H1 (cell line): ENCODE measurements at regions of chr6 and their contacts with region 1.

Region 1: DNA sequence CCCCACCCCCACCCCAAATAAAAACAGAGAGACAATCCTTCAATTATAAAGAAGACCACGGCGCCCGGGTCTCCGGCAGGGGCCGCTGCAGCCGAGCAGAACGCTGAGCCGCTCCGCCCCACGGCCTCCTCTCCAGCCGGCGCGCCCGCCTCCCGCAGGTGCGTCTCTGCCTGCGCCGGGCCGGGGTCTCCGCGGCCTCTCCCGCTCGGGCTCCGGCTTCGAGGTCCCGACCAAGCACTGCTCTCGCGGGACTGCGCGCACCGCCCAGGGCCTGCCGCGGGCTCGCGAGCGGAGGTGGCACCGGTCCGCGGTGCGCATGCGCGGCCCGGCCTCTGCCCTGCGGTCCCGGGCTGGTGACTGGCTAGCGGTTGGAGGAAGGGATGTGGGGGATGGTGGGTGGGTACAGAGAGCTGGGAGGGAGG is 241 bp upstream of the SIRT5 start:
- DNase-seq: peak; percentile 91 to 96
- H3K4me3 ChIP-seq: peak overlapping the region; percentile 69 to 80 (median 75)
- H3K27ac ChIP-seq: peak overlapping the region; percentile 87
- H3K4me1 ChIP-seq: peaks cover 0 to 6% (median 5%) of the 10 kb centered on the region in 4 experiments; a peak in 6 of 7 replicates
- H3K27me3 ChIP-seq: no peaks in the 10 kb centered on the region
- CTCF ChIP-seq: peak; percentile 46 to 70 (median 63)
- EP300 ChIP-seq: no peak
- POLR2A ChIP-seq: peak; percentile 39 to 76; a peak in 2 of 3 replicates
- RAD21 ChIP-seq: peak; percentile 38 to 59

Region 2: GRCh38 chr6:13336553-13336952 is 237.6 kb before region 1 on chr6:
- CTCF ChIA-PET with region 1: interaction called, 11 read pairs
- POLR2A ChIA-PET with region 1: interaction called, 12 read pairs
- DNase-seq: peak; percentile 88 to 98
- H3K4me3 ChIP-seq: no peak overlapping the region
- H3K27ac ChIP-seq: no peak overlapping the region
- H3K4me1 ChIP-seq: peaks cover 0 to 2% (median 0%) of the 10 kb centered on the region in 4 experiments; a peak in 1 of 7 replicates
- H3K27me3 ChIP-seq: no peaks in the 10 kb centered on the region; a peak in 1 of 7 replicates
- CTCF ChIP-seq: peak; percentile 72 to 98 (median 87)
- EP300 ChIP-seq: no peak
- POLR2A ChIP-seq: no peak
- RAD21 ChIP-seq: peak; percentile 97 to 98

Region 3: GRCh38 chr6:13487122-13488014 is 86.8 kb before region 1 on chr6 and contains the start of gene GFOD1:
- CTCF ChIA-PET with region 1: interaction called, 6 read pairs
- POLR2A ChIA-PET with region 1: interaction called, 29 read pairs
- DNase-seq: peak; percentile 39 to 89
- H3K4me3 ChIP-seq: peak within 1 kb of the TSS; percentile 57 to 87 (median 75)
- H3K27ac ChIP-seq: no peak within 1 kb of the TSS
- H3K4me1 ChIP-seq: peaks cover 0 to 8% (median 3%) of the 10 kb centered on the region in 4 experiments; a peak in 5 of 7 replicates
- H3K27me3 ChIP-seq: peaks cover 7 to 53% (median 32%) of the 10 kb centered on the region in 4 experiments
- CTCF ChIP-seq: no peak
- EP300 ChIP-seq: no peak
- POLR2A ChIP-seq: peak in 1 of 2 experiments; percentile 40; a peak in 2 of 3 replicates
- RAD21 ChIP-seq: peak; percentile 2 to 15; a peak in 2 of 4 replicates
- total RNA-seq, gene GFOD1: 8.5 and 8.8 TPM in 2 replicates

Region 4: DNA sequence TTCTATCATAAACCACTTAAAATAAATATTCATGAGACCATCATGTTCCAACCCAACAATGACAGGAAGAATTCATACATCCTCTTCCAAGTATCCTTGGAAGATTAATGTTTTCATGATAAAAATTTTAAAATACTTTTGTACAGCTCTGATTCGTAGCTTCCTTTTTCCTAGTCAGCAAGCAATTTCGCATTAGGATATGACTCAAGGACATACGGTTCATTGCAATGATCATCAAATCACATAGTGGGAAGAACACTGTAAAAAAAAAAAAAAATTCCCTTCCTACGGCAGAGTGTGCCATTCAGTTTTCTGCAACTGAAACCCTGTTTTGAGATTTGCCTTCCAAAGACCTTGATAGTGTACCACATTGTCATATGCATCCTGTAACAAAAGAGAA is 51.5 kb before region 1 on chr6:
- CTCF ChIA-PET with region 1: no interaction called
- POLR2A ChIA-PET with region 1: no interaction called
- DNase-seq: no peak
- H3K4me3 ChIP-seq: no peak overlapping the region
- H3K27ac ChIP-seq: no peak overlapping the region
- H3K4me1 ChIP-seq: no peaks in the 10 kb centered on the region
- H3K27me3 ChIP-seq: no peaks in the 10 kb centered on the region
- CTCF ChIP-seq: no peak
- EP300 ChIP-seq: no peak
- POLR2A ChIP-seq: no peak
- RAD21 ChIP-seq: no peak

Region 5: GRCh38 chr6:13561624-13562267 is 12.4 kb before region 1 on chr6:
- CTCF ChIA-PET with region 1: interaction called, 24 read pairs
- POLR2A ChIA-PET with region 1: interaction called, 16 read pairs
- DNase-seq: no peak
- H3K4me3 ChIP-seq: no peak overlapping the region
- H3K27ac ChIP-seq: no peak overlapping the region
- H3K4me1 ChIP-seq: no peaks in the 10 kb centered on the region; a peak in 1 of 7 replicates
- H3K27me3 ChIP-seq: no peaks in the 10 kb centered on the region
- CTCF ChIP-seq: no peak
- EP300 ChIP-seq: no peak
- POLR2A ChIP-seq: no peak
- RAD21 ChIP-seq: no peak

Region 6: GRCh38 chr6:13614926-13615798 is 41.0 kb after region 1 on chr6 and contains the start of gene NOL7:
- CTCF ChIA-PET with region 1: interaction called, 15 read pairs
- POLR2A ChIA-PET with region 1: interaction called, 32 read pairs
- DNase-seq: peak; percentile 95 to 99
- H3K4me3 ChIP-seq: peak within 1 kb of the TSS; percentile 58 to 99 (median 91)
- H3K27ac ChIP-seq: peak within 1 kb of the TSS; percentile 87
- H3K4me1 ChIP-seq: peaks cover 0 to 2% (median under 1%) of the 10 kb centered on the region in 4 experiments; a peak in 3 of 7 replicates
- H3K27me3 ChIP-seq: no peaks in the 10 kb centered on the region
- CTCF ChIP-seq: peak; percentile 80 to 99 (median 95)
- EP300 ChIP-seq: no peak
- POLR2A ChIP-seq: peak in 1 of 2 experiments; percentile 94; a peak in 2 of 3 replicates
- RAD21 ChIP-seq: peak in 1 of 2 experiments; percentile 1; a peak in 2 of 4 replicates
- total RNA-seq, gene NOL7: 67.8 and 70.4 TPM in 2 replicates